ENCODE measurements at regions of chr15 and their contacts with region 1.

Region 1: GRCh38 chr15:92383519-92384326 is 10.0 kb upstream of the ST8SIA2 start:
- DNase-seq: peak; percentile 26
- ATAC-seq: peak; percentile 94
- H3K4me3 ChIP-seq: no peak overlapping the region
- H3K27ac ChIP-seq: no peak overlapping the region
- H3K4me1 ChIP-seq: no peaks in the 10 kb centered on the region
- H3K27me3 ChIP-seq: peaks cover 36% of the 10 kb centered on the region; the same call in 1 of the 2 replicates
- CTCF ChIP-seq: peak; percentile 60 to 96 (median 93); a peak in 5 of 6 replicates
- POLR2A ChIP-seq: no peak
- RAD21 ChIP-seq: peak; percentile 57

Region 2: DNA sequence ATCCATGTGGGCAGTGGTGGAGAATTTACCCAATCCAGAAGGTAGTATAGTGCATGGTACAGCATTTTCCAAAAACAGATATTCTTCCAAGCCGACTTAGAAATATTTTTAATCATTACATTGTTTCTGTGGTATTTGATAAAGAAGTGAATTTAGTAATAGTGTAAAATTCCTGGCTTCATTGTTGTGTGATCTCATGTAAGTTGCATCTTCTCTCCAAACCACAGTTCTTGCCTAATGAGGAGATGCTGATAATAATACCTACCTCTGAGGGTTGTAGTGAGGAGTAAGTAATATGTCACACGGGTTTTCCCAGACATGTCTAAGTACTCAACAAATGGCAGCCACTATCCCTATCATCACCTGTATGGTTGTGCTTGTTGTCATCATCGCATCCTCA is 363.0 kb before region 1 on chr15:
- CTCF ChIA-PET with region 1: no interaction called
- POLR2A ChIA-PET with region 1: no interaction called
- RAD21 ChIA-PET with region 1: no interaction called
- intact Hi-C with region 1: no loop called
- DNase-seq: no peak
- ATAC-seq: no peak
- H3K4me3 ChIP-seq: no peak overlapping the region
- H3K27ac ChIP-seq: no peak overlapping the region
- H3K4me1 ChIP-seq: no peaks in the 10 kb centered on the region
- H3K27me3 ChIP-seq: peaks cover 3% of the 10 kb centered on the region; the same call in 1 of the 2 replicates
- CTCF ChIP-seq: no peak
- POLR2A ChIP-seq: no peak
- RAD21 ChIP-seq: no peak

Region 3: GRCh38 chr15:92091155-92091734 is 292.5 kb before region 1 on chr15:
- CTCF ChIA-PET with region 1: interaction called, 3 read pairs
- POLR2A ChIA-PET with region 1: no interaction called
- RAD21 ChIA-PET with region 1: no interaction called
- intact Hi-C with region 1: loop called (anchors 1 kb)
- DNase-seq: peak; percentile 15
- ATAC-seq: peak; percentile 98
- H3K4me3 ChIP-seq: no peak overlapping the region
- H3K27ac ChIP-seq: no peak overlapping the region
- H3K4me1 ChIP-seq: no peaks in the 10 kb centered on the region
- H3K27me3 ChIP-seq: peaks cover 7% of the 10 kb centered on the region
- CTCF ChIP-seq: peak; percentile 56 to 84 (median 81); a peak in 5 of 6 replicates
- POLR2A ChIP-seq: no peak
- RAD21 ChIP-seq: peak; percentile 76

Region 4: GRCh38 chr15:92332125-92332899 is 51.4 kb before region 1 on chr15:
- CTCF ChIA-PET with region 1: no interaction called
- POLR2A ChIA-PET with region 1: no interaction called
- RAD21 ChIA-PET with region 1: no interaction called
- intact Hi-C with region 1: no loop called
- DNase-seq: no peak
- ATAC-seq: no peak
- H3K4me3 ChIP-seq: no peak overlapping the region
- H3K27ac ChIP-seq: no peak overlapping the region
- H3K4me1 ChIP-seq: no peaks in the 10 kb centered on the region
- H3K27me3 ChIP-seq: peaks cover 7% of the 10 kb centered on the region; the same call in 1 of the 2 replicates
- CTCF ChIP-seq: no peak
- POLR2A ChIP-seq: no peak
- RAD21 ChIP-seq: no peak

Measured in HCT116 (cell line).